ENCODE measurements at regions of chr14 and their contacts with region 1.

Region 1: DNA sequence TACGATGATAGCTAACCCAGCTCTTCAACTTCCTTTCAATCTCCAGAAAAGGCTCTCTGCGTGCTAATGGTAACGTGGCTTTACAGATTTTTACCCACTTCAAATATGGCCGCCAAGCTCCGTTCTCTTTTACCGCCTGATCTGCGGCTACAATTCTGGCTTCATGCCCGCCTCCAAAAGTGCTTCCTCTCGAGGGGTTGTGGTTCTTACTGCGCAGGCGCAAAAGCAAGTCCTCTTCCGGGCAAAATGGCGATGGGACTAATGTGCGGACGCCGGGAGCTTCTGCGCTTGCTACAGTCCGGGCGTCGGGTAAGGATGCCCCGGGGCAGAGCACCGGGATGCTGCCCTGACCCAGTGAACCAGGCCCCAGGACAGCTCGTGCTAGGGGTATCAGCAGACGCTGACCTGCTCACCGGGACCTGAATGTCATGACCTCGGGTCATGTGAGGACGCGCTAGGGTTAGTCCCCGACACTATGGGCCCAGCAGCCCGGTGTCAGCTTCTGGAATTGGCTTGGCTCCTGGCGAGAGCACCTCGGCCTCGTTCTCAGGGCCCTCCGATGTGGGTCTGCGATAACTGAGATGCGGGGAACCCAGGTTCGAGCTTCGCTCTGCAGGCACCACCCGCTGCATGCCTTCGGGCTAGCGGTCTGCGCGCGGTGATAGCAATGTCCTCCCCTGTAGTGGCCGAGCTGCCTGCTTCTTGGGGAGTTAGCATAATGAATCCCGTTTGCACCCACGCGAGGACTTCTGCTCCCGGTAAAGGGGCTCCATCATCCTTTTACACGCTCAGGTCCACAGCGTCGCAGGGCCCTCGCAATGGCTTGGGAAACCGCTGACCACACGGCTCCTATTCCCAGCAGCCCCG is at the start of gene OXA1L:
- DNase-seq: peak; percentile 97 to 98
- ATAC-seq: peak; percentile 98 to 99
- H3K4me3 ChIP-seq: peak within 1 kb of the TSS; percentile 73 to 96 (median 84)
- H3K27ac ChIP-seq: peak within 1 kb of the TSS; percentile 84 to 94 (median 92)
- H3K4me1 ChIP-seq: peaks cover 16 to 19% of the 10 kb centered on the region in 2 donors
- H3K27me3 ChIP-seq: no peaks in the 10 kb centered on the region
- CTCF ChIP-seq: no peak
- POLR2A ChIP-seq: peak; percentile 52 to 65
- total RNA-seq, gene OXA1L: 83.5 to 135 (median 114) TPM

Region 2: GRCh38 chr14:22263897-22264296 is 502.8 kb before region 1 on chr14:
- in situ Hi-C with region 1: no loop called
- intact Hi-C with region 1: no loop called
- DNase-seq: no peak
- ATAC-seq: no peak
- H3K4me3 ChIP-seq: no peak overlapping the region
- H3K27ac ChIP-seq: no peak overlapping the region
- H3K4me1 ChIP-seq: no peaks in the 10 kb centered on the region
- H3K27me3 ChIP-seq: no peaks in the 10 kb centered on the region
- CTCF ChIP-seq: no peak
- POLR2A ChIP-seq: no peak

Region 3: GRCh38 chr14:22570132-22570949 is 196.3 kb before region 1 on chr14:
- in situ Hi-C with region 1: no loop called
- intact Hi-C with region 1: loop called (anchors 1 kb)
- DNase-seq: peak; percentile 35 to 56
- ATAC-seq: peak; percentile 58 to 82
- H3K4me3 ChIP-seq: no peak overlapping the region
- H3K27ac ChIP-seq: peak overlapping the region in 3 of 4 donors; percentile 0 to 39 (median 39)
- H3K4me1 ChIP-seq: peaks cover 21 to 28% of the 10 kb centered on the region in 2 donors
- H3K27me3 ChIP-seq: no peaks in the 10 kb centered on the region
- CTCF ChIP-seq: peak; percentile 75 to 90 (median 84)
- POLR2A ChIP-seq: no peak

Region 4: DNA sequence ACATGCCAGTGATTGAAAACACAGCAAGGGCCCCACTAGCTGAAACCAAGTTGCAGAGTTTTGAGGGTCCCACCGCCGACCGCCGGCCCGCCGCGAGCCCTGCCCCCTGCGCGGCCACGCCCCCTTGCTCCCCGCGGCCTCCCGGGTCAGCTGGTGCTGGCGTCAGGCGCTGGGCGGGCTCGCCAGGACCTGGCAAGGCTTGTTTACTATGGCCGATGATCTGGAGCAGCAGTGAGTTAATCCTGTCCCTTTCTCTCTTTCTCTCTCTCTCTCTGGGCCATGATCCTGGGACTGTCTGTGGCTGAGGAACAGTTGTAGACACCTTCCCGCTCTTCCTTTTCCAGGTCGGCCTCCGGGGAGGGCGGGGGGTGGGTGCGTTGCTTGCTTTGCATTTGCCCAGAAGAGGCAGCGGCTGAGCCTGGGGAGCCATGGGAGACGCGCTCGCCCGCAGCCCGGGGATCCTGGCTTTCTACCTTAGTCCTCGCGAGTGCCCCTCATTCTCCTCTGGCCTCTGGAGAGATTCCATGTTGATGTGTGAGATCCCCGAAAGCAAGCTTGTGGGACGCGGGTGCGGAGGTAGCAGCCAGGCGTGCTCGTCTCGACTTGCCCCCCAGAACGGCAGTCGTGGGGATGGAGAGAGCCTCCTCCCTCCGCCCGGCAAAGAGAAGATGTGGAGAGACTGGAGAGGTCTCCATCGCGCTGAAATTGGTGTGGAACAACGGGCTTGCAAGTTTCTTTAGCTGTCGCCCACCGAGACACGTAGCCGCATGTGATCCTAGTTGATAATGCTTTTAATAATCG is 168.4 kb before region 1 on chr14 and contains the start of gene ABHD4:
- in situ Hi-C with region 1: loop called in 1 of 4 experiments (anchors 10 kb)
- intact Hi-C with region 1: no loop called
- DNase-seq: peak; percentile 74 to 83
- ATAC-seq: peak; percentile 89 to 92
- H3K4me3 ChIP-seq: peak within 1 kb of the TSS; percentile 77 to 91 (median 85)
- H3K27ac ChIP-seq: peak within 1 kb of the TSS; percentile 89 to 98 (median 94)
- H3K4me1 ChIP-seq: peaks cover 21 to 30% of the 10 kb centered on the region in 2 donors
- H3K27me3 ChIP-seq: no peaks in the 10 kb centered on the region
- CTCF ChIP-seq: no peak
- POLR2A ChIP-seq: peak; percentile 80 to 89
- total RNA-seq, gene ABHD4: 17.1 to 38.7 (median 27.6) TPM

Region 5: DNA sequence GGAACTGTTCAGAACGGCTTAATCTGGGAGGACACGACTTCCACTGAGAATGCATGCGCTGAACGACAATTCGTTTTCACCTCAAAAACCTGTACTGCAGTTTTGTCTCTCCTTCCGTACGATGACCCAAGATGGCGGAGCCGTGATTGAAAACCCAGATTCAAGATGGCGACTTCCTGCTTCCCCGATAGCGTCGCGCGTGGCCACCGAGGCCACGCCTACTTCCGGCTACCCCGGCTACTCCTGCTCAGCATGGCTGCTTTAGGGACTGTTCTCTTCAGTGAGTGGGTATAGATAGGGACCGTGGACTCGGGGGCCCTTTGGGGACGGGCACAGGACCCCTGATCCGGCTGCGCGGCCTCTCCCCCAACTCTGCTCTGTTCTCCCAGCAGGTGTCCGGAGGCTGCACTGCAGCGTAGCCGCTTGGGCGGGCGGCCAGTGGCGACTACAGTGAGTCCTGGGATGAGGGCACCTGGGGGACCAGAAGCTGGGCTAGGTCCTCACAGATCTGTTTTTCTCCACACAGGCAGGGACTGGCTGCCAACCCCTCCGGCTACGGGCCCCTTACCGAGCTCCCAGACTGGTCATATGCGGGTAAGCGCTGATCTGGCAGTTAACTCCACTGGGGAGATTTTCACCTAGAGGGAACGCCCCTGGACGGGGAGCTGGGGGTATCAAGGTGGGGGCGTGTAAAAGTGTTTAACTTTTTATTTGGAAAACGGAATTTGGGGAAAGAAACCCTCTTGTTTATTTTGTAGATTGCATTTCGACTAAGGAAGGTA is 63.2 kb after region 1 on chr14 and contains the start of gene MRPL52:
- in situ Hi-C with region 1: no loop called
- intact Hi-C with region 1: loop called (anchors 1 kb)
- DNase-seq: peak; percentile 82 to 86
- ATAC-seq: peak; percentile 100
- H3K4me3 ChIP-seq: peak within 1 kb of the TSS; percentile 74 to 97 (median 79)
- H3K27ac ChIP-seq: peak within 1 kb of the TSS; percentile 83 to 87 (median 86)
- H3K4me1 ChIP-seq: peaks cover 7 to 9% of the 10 kb centered on the region in 2 donors
- H3K27me3 ChIP-seq: no peaks in the 10 kb centered on the region
- CTCF ChIP-seq: no peak
- POLR2A ChIP-seq: peak in 1 of 2 donors; percentile 22
- total RNA-seq, gene MRPL52: 48.5 to 153 (median 89.0) TPM

Region 6: DNA sequence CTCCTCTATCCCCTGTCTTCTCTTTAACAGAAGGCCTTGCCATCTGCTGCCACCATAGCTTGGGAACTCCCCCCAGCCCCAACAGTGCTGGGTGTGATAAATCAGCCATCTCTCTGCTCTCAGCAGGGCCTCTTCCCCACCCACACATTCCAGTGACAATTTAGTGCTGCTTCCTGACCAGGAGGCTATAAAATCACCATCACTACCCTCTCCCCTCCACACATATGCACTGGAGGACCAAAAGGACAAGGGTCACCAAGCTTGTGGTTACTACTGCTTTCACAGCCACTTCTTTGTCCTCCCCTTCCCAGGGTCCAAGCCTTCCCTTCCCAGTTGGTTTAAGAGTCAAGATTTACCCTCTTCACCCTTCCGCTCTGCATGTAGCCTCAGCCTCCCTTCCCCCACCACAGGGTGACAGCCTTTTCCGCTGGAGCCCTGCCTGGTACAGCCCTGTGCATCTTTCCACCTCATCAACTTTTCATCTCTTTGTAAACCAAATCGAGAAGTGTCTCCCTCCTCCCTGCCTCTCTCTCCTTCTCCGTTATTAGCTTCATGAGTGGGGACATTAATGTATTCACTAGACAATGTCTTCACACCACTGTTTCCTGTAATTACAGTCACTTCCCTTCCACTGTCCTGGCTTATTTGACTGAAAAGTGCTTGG is 258.6 kb after region 1 on chr14:
- in situ Hi-C with region 1: no loop called
- intact Hi-C with region 1: no loop called
- DNase-seq: no peak
- ATAC-seq: no peak
- H3K4me3 ChIP-seq: no peak overlapping the region
- H3K27ac ChIP-seq: no peak overlapping the region
- H3K4me1 ChIP-seq: peaks cover 5 to 11% of the 10 kb centered on the region in 2 donors
- H3K27me3 ChIP-seq: no peaks in the 10 kb centered on the region
- CTCF ChIP-seq: no peak
- POLR2A ChIP-seq: no peak

Region 7: DNA sequence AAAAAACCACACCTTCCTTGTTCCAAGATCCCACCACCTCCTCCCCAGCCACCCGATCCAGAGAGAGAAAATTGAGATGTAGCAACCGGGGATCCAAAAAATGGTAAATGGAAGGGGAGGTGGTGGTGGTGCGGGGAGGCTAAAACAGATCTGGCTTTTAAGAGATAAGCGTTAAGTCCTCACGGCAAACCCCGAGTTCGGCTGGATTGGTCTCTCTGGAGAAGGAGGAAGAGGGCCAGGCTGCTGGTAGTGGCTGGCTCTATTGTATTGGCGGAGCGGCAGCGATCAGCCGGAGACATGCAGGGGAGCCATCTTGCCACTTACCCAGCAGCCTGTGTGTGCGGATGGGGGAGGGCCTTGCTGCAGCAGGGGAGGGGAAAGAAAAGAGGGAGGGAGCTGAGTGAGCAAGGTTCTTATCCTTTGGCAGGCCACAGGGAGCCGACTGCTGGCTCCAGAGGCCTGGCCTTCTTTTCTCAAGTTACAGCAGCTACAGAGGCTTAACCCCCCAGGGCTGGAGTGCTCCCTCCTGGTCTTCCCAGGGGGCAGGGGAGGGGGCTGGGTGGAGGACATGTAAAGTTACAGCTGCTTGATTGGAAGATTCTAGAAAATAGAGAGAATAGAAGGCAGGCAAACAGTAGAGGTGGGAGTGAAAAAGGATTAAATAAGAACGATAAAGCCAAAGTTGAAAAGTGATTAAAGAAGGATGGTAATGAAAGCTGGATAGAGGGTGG is 304.7 kb after region 1 on chr14:
- in situ Hi-C with region 1: no loop called
- intact Hi-C with region 1: no loop called
- DNase-seq: peak; percentile 84 to 90
- ATAC-seq: peak; percentile 92 to 93
- H3K4me3 ChIP-seq: peak overlapping the region; percentile 68 to 81 (median 74)
- H3K27ac ChIP-seq: peak overlapping the region; percentile 88 to 95 (median 90)
- H3K4me1 ChIP-seq: peaks cover 25 to 32% of the 10 kb centered on the region in 2 donors
- H3K27me3 ChIP-seq: no peaks in the 10 kb centered on the region
- CTCF ChIP-seq: no peak
- POLR2A ChIP-seq: peak; percentile 63 to 67

Measured in gastrocnemius medialis (tissue), 4 donors.